ENCODE measurements at regions of chr1 and their contacts with region 1.

Region 1: DNA sequence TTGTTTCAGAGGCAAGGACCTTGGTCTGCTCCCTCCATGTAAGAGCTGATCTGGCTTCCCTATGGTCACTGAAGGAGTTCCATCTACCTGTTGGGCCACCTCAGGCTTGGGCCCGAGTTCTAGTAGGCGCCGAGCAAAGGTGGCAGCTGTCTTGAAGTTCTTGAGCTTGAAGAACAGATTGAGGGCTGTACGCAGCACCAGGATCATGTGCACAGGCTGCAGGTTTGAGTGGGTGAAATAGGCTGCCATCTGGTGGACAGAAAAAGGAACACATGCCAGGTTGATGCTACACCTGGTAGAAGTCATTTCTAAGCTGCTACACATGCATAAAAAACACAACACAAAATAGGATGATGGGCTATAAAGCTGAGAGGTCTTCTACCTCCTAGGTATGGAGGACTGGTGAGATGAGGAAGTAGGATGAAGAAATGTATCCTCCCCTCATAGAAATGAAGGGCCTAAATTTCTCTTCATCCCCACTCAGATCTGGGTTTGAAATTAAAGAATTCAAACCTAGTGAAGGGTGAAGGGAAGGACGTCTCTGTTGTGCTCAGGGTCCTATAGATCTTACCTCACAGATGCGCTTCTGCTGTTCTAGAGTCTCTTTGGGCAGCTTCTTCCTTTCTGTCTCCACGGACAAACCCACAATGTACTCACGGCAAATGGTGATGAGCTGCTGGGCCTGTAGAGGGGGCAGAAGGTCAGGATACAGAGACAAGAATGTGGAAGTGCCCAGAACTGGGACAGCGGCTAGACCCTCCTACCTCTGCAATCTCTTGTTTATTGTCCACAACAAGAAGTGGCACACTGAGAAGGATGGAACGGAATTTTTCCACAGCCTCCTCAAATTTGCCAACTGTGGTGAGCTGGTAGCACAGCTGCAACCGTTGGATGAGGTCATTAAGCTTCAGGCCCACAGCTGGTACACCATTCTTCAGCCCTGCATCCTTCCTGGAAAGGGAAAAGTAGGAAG is 6.6 kb upstream of the PEX19 start:
- DNase-seq: peak; percentile 32
- H3K4me3 ChIP-seq: no peak overlapping the region
- H3K27ac ChIP-seq: no peak overlapping the region
- H3K27me3 ChIP-seq: no peaks in the 10 kb centered on the region
- CTCF ChIP-seq: peak; percentile 82

Region 2: DNA sequence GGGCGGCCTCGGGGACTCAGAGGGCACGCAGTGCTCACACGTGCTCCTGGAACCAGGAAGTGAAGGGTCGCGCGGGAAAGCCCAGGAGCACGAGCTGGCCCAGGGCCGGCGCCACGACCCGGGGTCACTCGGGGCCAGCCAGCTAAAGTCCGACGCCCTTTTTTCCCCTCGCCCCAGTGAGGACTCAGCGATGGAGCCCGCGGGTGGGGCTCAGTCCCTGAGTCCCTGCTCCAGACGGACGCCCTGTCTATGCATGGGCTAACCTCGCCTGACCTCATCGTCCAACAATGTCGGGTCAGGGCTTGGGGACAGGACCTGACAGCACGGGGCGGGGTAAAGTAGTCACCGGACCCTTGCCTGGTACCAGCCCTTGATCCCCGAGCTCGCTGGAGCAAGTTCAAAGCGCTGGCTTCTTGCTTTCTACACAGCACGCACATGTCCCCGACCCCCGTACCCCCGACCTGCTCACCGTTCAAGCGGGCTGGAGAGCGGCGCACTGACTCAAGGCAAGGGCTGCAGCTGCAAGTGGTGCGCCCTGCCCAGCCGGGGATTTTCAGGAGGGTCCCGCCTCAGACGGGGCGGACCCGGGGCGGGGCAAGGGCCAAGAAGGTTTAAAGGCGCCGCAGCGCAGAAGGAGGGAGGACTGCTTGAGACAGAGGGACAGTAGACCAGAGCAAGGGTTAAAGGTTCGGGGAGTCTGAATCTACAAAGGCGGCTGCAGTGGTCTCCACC is 366.4 kb before region 1 on chr1 and contains the start of gene TAGLN2:
- CTCF ChIA-PET with region 1: no interaction called
- POLR2A ChIA-PET with region 1: no interaction called
- DNase-seq: peak; percentile 85
- H3K4me3 ChIP-seq: peak within 1 kb of the TSS; percentile 97
- H3K27ac ChIP-seq: peak within 1 kb of the TSS; percentile 97
- H3K27me3 ChIP-seq: no peaks in the 10 kb centered on the region
- CTCF ChIP-seq: no peak
- polyA plus RNA-seq, gene TAGLN2: 400 and 472 TPM in 2 replicates

Region 3: GRCh38 chr1:160205242-160206035 is 86.1 kb before region 1 on chr1 and contains the start of gene PEA15:
- CTCF ChIA-PET with region 1: interaction called, 12 read pairs
- POLR2A ChIA-PET with region 1: no interaction called
- DNase-seq: no peak
- H3K4me3 ChIP-seq: peak within 1 kb of the TSS; percentile 95
- H3K27ac ChIP-seq: peak within 1 kb of the TSS; percentile 75
- H3K27me3 ChIP-seq: no peaks in the 10 kb centered on the region
- CTCF ChIP-seq: no peak
- polyA plus RNA-seq, gene PEA15: 512 and 555 TPM in 2 replicates

Region 4: GRCh38 chr1:160244209-160244608 is 47.3 kb before region 1 on chr1:
- CTCF ChIA-PET with region 1: interaction called, 14 read pairs
- POLR2A ChIA-PET with region 1: no interaction called
- DNase-seq: no peak
- H3K4me3 ChIP-seq: no peak overlapping the region
- H3K27ac ChIP-seq: no peak overlapping the region
- H3K27me3 ChIP-seq: no peaks in the 10 kb centered on the region
- CTCF ChIP-seq: no peak

Region 5: DNA sequence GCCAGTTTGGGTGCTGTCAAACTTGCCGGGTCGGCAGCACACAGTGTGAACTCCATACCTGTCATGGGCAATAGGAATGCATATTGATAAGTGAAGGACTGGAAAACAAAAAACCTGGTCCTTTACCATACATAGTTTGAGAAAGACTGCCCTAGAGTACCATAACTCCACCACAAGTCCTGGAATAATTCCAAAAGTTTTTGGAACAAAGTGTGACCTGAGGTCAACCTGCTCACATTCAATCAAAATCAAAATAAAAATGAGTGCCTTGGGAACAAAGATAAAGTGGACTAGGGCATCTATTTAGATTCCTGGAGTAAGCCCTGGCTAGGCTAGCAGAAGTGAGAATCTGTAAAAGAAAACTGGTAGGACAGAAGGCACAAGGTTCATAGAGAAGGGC is 14.2 kb before region 1 on chr1:
- CTCF ChIA-PET with region 1: interaction called, 30 read pairs
- POLR2A ChIA-PET with region 1: no interaction called
- DNase-seq: no peak
- H3K4me3 ChIP-seq: no peak overlapping the region
- H3K27ac ChIP-seq: no peak overlapping the region
- H3K27me3 ChIP-seq: no peaks in the 10 kb centered on the region
- CTCF ChIP-seq: no peak

Region 6: GRCh38 chr1:160328184-160328583 is 36.6 kb after region 1 on chr1:
- CTCF ChIA-PET with region 1: interaction called, 33 read pairs
- POLR2A ChIA-PET with region 1: no interaction called
- DNase-seq: no peak
- H3K4me3 ChIP-seq: no peak overlapping the region
- H3K27ac ChIP-seq: no peak overlapping the region
- H3K27me3 ChIP-seq: no peaks in the 10 kb centered on the region
- CTCF ChIP-seq: no peak

Region 7: DNA sequence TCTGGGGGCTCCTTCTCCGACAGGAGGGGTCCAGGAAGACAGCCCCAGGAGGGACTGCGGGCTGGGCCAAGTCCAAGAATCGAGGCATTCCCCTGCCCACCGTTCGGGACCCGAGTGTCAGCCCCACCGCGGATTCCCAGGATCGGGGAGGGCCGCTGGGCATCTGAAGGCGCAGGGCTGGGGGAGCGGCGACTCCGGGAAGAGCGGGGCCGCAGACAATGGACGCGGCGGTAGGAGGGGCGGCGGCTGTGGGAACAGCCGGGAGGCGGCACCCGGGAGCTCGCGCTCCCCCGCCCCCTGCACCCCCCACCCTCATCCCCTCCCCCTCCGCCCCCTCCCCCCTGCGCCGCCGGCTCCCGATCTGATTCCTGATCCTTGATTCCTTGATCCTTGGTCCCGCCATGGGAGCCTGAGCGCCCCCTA is 108.7 kb after region 1 on chr1 and contains the start of gene VANGL2:
- CTCF ChIA-PET with region 1: no interaction called
- POLR2A ChIA-PET with region 1: no interaction called
- DNase-seq: no peak
- H3K4me3 ChIP-seq: peak within 1 kb of the TSS; percentile 64
- H3K27ac ChIP-seq: no peak within 1 kb of the TSS
- H3K27me3 ChIP-seq: peaks cover 43% of the 10 kb centered on the region
- CTCF ChIP-seq: no peak
- polyA plus RNA-seq, gene VANGL2: 3.4 TPM in 2 replicates

Region 8: DNA sequence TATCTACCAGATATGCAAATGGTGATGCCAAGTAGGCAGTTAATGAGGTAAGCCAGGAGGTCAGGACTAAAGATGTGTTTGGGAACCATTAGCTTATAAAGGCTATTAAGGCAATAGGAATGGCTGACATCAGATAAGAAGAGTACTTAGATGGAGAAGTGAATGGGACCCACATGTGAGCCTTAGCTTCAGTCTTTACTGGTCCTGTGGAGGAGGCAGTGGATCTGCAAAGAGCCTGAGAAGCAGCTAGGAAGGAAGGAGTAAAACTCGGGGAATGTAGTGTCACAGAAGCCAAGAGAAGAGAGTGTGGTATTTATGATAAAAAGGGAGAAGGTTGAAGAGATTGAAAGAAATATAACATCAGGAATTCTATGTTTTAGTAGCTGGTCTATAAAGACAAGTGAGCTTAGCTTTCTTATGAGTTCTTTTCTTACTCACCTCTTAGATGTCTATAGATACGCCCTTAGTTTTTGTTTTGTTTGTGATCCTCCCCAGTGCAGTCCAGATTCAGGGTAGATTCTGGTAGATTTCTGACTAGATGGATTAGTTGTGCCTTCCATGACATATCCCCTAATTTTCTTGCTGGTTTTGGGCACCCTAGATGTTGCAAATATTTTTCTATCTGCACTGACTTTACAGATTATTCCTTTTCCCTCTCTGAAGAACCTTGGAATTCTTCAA is 192.1 kb after region 1 on chr1:
- CTCF ChIA-PET with region 1: no interaction called
- POLR2A ChIA-PET with region 1: no interaction called
- DNase-seq: no peak
- H3K4me3 ChIP-seq: no peak overlapping the region
- H3K27ac ChIP-seq: no peak overlapping the region
- H3K27me3 ChIP-seq: no peaks in the 10 kb centered on the region
- CTCF ChIP-seq: no peak